ENCODE measurements at regions of chr3 and their contacts with region 1.

Region 1: DNA sequence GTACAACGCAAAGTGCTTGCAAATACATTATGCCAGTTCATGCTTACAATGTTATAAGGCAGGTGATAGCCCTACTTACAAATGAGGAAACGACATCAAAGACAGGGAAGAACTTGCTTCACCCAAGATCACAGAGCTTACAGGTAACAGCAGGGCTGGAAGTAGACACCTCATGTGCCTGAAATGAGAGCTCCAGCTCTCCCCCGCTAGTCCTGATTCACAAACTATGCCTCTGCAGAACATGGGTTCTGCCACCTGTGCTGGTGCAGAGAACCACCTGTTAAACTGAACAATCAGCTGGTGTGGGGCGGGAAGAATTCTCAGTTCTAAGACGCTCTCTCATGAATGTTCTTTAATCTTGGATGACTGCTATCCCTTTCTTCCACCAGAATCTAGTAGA is 7.4 kb downstream of the RBSN start:
- DNase-seq: no peak
- ATAC-seq: no peak
- H3K4me3 Mint-ChIP-seq: no peak overlapping the region
- H3K27ac Mint-ChIP-seq: no peak overlapping the region
- H3K4me1 Mint-ChIP-seq: peaks cover 3% of the 10 kb centered on the region
- H3K27me3 Mint-ChIP-seq: no peaks in the 10 kb centered on the region

Region 2: GRCh38 chr3:13200946-13201345 is 1890.6 kb before region 1 on chr3:
- CTCF ChIA-PET with region 1: no interaction called
- POLR2A ChIA-PET with region 1: no interaction called
- intact Hi-C with region 1: no loop called
- DNase-seq: peak; percentile 14
- ATAC-seq: no peak
- H3K4me3 Mint-ChIP-seq: no peak overlapping the region
- H3K27ac Mint-ChIP-seq: no peak overlapping the region
- H3K4me1 Mint-ChIP-seq: peaks cover 7% of the 10 kb centered on the region
- H3K27me3 Mint-ChIP-seq: peaks cover 28% of the 10 kb centered on the region

Region 3: GRCh38 chr3:15074493-15074892 is 17.1 kb before region 1 on chr3:
- CTCF ChIA-PET with region 1: no interaction called
- POLR2A ChIA-PET with region 1: no interaction called
- intact Hi-C with region 1: loop called in 1 of 2 experiments (anchors 2 kb)
- DNase-seq: no peak
- ATAC-seq: no peak
- H3K4me3 Mint-ChIP-seq: no peak overlapping the region
- H3K27ac Mint-ChIP-seq: no peak overlapping the region
- H3K4me1 Mint-ChIP-seq: peaks cover 2% of the 10 kb centered on the region
- H3K27me3 Mint-ChIP-seq: no peaks in the 10 kb centered on the region

Region 4: GRCh38 chr3:15148614-15149013 is 57.0 kb after region 1 on chr3:
- CTCF ChIA-PET with region 1: no interaction called
- POLR2A ChIA-PET with region 1: no interaction called
- intact Hi-C with region 1: no loop called
- DNase-seq: no peak
- ATAC-seq: peak; percentile 26
- H3K4me3 Mint-ChIP-seq: no peak overlapping the region
- H3K27ac Mint-ChIP-seq: no peak overlapping the region
- H3K4me1 Mint-ChIP-seq: no peaks in the 10 kb centered on the region
- H3K27me3 Mint-ChIP-seq: peaks cover 18% of the 10 kb centered on the region

Measured in activated CD4-positive, alpha-beta T cell treated with anti-CD3 and anti-CD28 coated beads for 36 hours (primary cell).